Colonic mucosa (tissue), 4 donors: ENCODE measurements at regions of chr17 and their contacts with region 1.

Region 1: DNA sequence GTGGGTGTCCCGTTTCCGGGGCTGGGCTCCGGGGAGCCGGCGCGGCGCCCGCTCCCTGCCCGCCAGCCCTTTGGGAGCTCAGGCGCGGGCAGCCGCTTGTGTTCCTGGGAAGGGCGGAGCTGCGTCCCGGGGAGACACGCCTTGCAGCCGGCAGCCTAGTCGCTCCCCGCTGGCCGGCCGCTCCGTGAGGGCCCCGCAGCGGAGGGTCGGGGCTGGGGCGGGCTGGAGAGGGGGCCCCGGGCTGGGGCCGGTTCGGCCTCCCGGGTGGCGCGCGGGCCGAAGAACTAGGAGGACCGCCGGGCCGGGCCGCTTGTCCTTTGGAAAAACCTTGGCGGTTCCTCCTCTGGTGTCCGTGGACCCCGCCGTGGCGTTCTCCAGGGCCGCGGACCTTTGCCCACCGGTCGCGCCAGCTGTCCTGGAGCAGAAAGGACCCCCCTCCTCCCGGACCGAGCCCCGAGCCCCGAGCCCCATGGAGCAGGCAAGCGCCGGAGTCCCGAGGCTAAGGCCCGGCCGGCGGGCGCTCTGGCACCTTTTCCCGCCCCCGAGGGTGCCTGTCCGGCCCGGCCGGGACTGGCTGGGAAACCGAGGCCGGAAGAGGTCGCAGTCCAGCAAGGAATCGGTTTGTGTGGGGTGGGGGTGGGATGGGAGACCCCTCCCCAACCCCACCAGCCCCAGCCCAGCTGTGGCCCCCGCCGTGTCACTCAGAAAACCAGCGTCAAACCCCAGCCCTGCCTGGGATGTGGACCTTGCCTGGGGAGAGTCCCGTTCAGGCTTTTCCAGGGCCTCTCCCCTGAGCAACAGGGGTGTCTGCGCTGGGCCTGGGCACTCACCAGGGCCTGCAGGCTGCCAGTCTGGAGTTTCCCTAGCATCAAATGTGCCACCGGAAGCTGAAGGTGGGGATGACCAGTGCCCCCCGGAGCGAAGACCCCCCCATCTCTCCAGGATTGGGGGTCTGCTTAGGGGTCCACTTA is 6.8 kb upstream of the TBC1D3B start:
- DNase-seq: peak; percentile 72
- H3K4me3 ChIP-seq: peak overlapping the region; percentile 74
- H3K27ac ChIP-seq: peak overlapping the region; percentile 34
- H3K4me1 ChIP-seq: peaks cover 6% of the 10 kb centered on the region
- H3K27me3 ChIP-seq: no peaks in the 10 kb centered on the region
- CTCF ChIP-seq: no peak

Region 2: DNA sequence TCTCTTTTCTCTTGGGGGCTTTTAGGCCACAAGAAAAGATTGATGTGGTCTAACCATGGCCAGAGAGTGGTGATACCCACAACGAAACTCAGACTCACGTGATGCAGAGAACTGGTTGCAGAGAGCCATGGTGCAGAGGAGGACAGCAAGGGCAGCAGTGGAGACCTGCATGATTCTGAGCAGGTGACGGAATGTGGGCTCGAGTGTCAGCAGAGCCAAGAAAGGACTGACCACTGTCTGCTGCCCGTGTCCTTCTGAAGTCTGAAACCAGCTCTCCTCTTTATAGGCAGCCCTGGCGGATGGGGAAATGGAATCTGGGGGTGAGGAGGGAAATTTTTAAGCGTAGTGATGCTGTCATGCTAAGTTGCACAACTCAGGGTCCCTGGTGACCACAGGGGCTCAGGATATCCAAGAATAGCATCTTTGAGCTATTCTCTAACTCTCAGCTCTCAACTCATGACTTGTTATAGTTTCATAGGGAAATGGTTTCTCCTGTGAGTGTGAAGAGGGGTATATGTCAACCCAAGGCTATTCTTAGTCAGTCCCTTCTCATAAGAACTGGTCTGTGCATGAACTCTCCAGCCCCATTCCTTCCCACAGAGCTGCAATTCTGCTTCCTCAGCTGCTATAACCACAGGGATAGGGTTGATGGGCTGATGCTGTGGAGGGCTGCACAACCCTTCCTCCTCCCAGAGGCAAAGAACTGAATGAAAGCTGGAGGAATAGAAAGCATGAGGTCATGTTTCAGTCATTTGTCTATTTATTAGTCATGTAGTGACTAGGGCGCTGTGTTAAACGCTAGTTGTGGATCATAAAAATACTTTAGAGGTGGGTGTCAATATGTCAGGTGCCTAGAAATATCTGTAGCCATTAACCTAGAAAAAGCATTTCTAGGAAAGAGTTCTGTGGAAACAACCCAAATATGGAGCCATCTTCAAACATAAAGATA is 93.1 kb before region 1 on chr17 and contains the start of gene CCL3:
- intact Hi-C with region 1: no loop called
- DNase-seq: no peak
- H3K4me3 ChIP-seq: no peak within 1 kb of the TSS
- H3K27ac ChIP-seq: no peak within 1 kb of the TSS
- H3K4me1 ChIP-seq: no peaks in the 10 kb centered on the region
- H3K27me3 ChIP-seq: no peaks in the 10 kb centered on the region
- CTCF ChIP-seq: no peak
- total RNA-seq, gene CCL3: 2.0 to 2.1 TPM

Region 3: DNA sequence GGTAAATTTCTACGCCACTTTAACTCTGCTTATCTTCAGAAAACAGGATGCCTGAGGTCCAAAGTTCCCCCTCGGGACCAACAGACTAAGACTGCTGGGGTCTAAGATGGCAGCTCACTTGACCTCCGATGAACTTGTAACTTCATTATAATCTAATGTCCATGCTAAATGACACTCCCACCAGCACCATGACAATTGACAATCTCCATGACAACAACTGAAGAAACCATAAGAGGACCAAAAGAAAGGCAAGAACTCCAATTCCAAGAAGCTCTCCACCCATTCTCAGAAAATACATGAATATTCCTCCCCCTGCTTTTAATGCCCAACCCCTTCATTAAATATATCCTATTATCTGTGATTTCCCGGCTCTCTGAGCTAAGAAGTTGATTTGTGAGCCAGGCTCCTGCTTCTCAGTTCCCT is 72.2 kb before region 1 on chr17:
- intact Hi-C with region 1: loop called (anchors 5 kb)
- DNase-seq: no peak
- H3K4me3 ChIP-seq: no peak overlapping the region
- H3K27ac ChIP-seq: no peak overlapping the region
- H3K4me1 ChIP-seq: no peaks in the 10 kb centered on the region
- H3K27me3 ChIP-seq: no peaks in the 10 kb centered on the region
- CTCF ChIP-seq: no peak

Region 4: DNA sequence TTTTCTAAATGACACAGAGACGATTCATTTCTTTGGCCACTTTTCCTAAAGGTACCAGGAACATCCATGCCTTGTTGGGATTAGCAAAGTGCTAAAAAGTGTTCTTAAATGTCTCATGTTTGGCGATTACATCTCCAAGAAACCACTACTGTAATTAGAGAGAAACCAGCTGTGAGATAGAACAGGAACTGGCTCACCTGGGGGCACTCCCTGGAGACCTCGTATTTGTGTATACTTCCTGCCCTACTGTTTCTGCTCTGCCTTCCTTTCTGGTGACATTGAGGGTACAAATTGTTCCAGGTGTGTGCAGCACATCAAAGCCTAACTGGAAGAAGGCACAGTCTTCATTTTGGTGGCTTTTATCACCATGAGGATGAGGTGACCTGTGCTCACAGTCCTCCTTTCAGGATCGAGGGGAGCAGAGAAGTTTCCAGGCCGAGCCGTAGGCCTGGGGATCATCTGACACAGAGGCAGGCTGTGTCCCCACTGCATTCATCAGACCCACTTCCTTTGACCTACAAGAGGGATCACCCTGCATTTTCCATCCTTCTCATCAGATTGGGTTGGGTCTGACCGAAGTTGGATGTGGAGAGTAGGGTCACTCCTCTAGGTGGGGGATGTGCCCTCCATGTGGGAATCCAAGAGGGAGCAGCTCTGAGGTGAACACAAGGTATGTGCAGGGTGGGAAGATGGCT is 55.9 kb before region 1 on chr17:
- intact Hi-C with region 1: no loop called
- DNase-seq: no peak
- H3K4me3 ChIP-seq: no peak overlapping the region
- H3K27ac ChIP-seq: peak overlapping the region; percentile 63
- H3K4me1 ChIP-seq: peaks cover 10% of the 10 kb centered on the region
- H3K27me3 ChIP-seq: no peaks in the 10 kb centered on the region
- CTCF ChIP-seq: no peak

Region 5: DNA sequence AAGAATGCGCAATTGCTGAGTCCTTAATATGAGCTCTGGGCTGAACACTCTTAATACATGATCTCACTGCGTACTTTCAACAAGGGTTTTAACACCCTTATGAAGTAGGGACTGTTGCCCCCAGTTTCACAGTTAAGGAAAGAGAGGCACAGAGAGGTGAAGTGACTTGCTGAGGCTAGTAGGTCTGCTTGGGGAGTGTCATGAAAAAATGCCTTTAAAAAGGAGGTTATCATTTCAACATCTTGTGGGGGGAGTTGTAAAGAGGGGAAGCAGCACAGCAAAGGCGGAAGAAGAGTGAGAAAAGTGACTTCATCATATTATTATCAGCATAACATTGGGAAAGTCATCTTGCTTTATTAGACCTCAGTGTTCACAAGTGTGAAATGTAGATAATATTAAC is 29.7 kb after region 1 on chr17:
- intact Hi-C with region 1: no loop called
- DNase-seq: no peak
- H3K4me3 ChIP-seq: no peak overlapping the region
- H3K27ac ChIP-seq: no peak overlapping the region
- H3K4me1 ChIP-seq: no peaks in the 10 kb centered on the region
- H3K27me3 ChIP-seq: no peaks in the 10 kb centered on the region
- CTCF ChIP-seq: no peak